Gastrocnemius medialis (tissue), 4 donors: ENCODE measurements at regions of chr10 and their contacts with region 1.

Region 1: DNA sequence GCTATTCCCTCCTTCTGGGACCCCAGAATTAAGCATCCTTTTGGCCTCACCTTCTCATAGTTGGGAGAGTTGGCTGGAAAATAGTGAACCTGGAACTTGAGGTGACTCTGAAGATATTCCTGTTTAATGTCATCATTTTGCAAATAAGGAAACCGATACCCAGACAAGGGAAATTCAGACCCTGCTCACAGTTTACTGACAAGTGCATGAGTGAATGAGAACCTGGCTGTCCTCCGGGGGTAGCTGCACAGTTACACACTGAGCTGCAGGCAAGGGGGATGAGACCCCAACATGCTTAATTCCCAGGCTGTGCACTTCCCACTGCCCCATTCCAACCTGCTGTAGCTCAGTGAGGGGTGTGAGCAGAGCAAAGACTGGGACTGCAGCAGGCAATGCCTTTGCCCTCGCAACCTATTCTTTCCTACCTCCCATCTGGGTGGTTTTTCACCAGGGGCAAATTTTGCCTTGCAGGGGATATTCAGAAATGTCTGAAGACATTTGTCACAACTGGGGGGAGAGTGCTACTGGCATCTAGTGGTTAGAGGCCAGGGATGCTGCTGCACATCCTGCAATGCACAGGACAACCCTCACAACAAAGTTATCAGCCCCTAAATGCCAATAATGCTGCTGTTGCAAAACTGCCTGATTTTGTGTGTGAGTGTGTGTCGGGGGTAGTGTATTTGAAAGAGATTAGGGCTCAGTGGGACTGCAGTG is 136.2 kb downstream of the SORCS3 start:
- DNase-seq: no peak
- ATAC-seq: no peak
- H3K4me3 ChIP-seq: no peak overlapping the region
- H3K27ac ChIP-seq: no peak overlapping the region
- H3K4me1 ChIP-seq: no peaks in the 10 kb centered on the region
- H3K27me3 ChIP-seq: no peaks in the 10 kb centered on the region
- CTCF ChIP-seq: no peak
- POLR2A ChIP-seq: no peak

Region 2: DNA sequence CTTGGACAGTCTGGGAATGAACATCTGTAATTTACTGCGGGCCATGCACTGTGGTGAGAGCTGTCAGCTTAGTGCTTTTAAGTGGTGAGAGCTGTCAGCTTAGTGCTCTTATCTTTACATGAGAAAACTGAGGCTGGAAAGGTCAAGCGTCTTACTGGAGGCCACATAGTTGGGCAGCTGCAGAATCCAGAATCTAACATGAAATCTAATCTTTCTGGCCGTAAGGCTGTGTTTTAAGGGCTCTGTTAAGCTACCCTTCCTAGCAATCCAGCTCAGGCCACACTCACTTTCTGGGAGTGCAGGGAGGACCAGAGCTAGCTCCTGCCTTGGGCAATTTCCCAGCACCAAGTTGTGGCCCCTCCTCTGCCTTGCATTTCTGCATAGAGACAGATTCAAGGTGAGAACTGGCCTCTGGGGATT is 65.9 kb before region 1 on chr10:
- in situ Hi-C with region 1: no loop called
- intact Hi-C with region 1: loop called (anchors 5 kb)
- DNase-seq: no peak
- ATAC-seq: no peak
- H3K4me3 ChIP-seq: no peak overlapping the region
- H3K27ac ChIP-seq: no peak overlapping the region
- H3K4me1 ChIP-seq: no peaks in the 10 kb centered on the region
- H3K27me3 ChIP-seq: no peaks in the 10 kb centered on the region
- CTCF ChIP-seq: no peak
- POLR2A ChIP-seq: no peak

Region 3: GRCh38 chr10:105161767-105162166 is 384.5 kb after region 1 on chr10:
- in situ Hi-C with region 1: no loop called
- intact Hi-C with region 1: no loop called
- DNase-seq: no peak
- ATAC-seq: no peak
- H3K4me3 ChIP-seq: no peak overlapping the region
- H3K27ac ChIP-seq: no peak overlapping the region
- H3K4me1 ChIP-seq: no peaks in the 10 kb centered on the region
- H3K27me3 ChIP-seq: no peaks in the 10 kb centered on the region
- CTCF ChIP-seq: no peak
- POLR2A ChIP-seq: no peak